Left cardiac atrium (tissue), 4 donors: ENCODE measurements at regions of chr11 and their contacts with region 1.

Region 1: DNA sequence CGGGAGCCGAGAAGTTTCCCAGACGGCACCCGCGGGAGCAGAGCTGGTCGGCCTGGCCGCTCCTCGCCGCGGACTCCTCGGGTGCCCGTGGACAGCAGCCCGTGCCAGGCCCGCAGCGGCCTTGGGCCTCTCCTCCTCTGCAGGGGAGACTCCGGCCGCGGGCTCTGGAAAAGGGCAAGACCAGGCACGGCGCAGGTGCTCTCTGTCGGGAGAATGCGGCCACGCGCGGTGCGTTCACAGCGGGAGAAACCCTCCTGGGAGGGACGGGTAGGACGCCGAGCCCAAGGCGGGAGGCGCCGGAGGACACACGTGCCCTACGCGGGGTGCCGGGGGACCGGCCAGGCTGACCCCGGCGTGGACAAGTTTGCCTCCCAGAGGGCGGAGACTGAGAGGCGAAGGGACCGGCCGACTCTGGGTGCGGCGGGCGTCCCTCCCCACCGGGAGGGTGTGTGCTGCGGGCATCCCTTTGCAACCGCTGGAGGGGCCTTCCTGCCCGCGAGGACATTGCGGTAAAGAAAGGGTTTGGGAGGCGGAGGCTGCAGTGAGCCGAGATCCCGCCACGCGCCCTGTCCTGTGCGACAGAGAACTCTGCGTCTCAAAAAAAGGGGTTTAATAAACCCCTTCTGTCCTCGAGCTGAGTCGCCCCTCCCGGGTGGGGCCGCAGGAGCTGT is 2.3 kb downstream of the IFITM1 start:
- DNase-seq: peak; percentile 66
- ATAC-seq: no peak

Region 2: GRCh38 chr11:355581-356458 is 39.7 kb after region 1 on chr11:
- intact Hi-C with region 1: loop called in 1 of 2 experiments (anchors 2 kb)
- DNase-seq: peak; percentile 98
- ATAC-seq: peak; percentile 86 to 91

Region 3: GRCh38 chr11:613369-614268 is 297.5 kb after region 1 on chr11:
- intact Hi-C with region 1: no loop called
- DNase-seq: peak; percentile 69
- ATAC-seq: peak; percentile 2 to 15

Region 4: GRCh38 chr11:639330-639955 is 323.3 kb after region 1 on chr11:
- intact Hi-C with region 1: no loop called
- DNase-seq: no peak
- ATAC-seq: no peak

Region 5: GRCh38 chr11:777288-778255 is 461.4 kb after region 1 on chr11 and contains the start of gene GATD1:
- intact Hi-C with region 1: no loop called
- DNase-seq: peak; percentile 94
- ATAC-seq: peak; percentile 94 to 97
- total RNA-seq, gene GATD1: 29.8 to 43.5 TPM